AG04450 (cell line): ENCODE measurements at regions of chr20 and their contacts with region 1.

Region 1: DNA sequence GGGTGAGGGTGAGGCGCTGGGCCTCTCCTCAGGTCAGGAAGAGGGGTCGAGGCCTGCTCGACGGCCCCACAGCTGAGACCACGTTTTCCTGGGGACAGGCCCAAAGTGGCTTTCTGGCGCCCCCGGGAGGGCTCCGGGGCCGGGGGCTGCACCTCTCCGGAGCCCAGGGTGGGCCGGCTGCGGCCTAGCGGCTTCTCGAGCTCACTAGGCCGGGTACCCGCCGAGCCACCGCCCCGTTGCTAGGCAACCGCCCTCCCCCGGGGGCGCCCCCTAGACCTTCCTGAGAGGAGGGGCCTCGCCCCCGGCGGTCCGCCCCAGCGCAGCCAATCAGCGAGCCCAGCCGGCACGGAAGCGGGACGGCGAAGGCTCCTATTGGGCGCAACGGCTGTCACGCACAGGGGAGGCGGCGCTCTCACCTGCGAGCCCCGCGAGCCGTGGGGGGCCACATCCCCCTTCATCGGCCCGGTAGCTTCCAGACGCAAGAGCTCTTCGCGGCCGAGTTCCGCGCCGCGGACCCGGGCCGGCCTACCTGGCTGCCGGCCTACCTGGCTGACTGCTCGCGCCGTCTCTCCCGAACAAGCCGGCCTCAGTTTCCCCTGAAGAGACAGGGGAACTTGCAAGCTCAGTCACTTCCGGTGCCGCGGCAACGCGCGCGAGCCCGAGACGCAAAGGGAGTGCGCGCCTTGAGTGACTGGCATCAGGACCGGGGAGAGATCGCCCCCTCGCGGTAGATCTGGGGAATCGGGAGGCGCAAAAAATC is 831 bp upstream of the BCL2L1 start:
- DNase-seq: peak; percentile 96
- H3K4me3 ChIP-seq: peak overlapping the region; percentile 84
- H3K27ac ChIP-seq: peak overlapping the region; percentile 98
- H3K27me3 ChIP-seq: no peaks in the 10 kb centered on the region
- CTCF ChIP-seq: peak; percentile 93

Region 2: DNA sequence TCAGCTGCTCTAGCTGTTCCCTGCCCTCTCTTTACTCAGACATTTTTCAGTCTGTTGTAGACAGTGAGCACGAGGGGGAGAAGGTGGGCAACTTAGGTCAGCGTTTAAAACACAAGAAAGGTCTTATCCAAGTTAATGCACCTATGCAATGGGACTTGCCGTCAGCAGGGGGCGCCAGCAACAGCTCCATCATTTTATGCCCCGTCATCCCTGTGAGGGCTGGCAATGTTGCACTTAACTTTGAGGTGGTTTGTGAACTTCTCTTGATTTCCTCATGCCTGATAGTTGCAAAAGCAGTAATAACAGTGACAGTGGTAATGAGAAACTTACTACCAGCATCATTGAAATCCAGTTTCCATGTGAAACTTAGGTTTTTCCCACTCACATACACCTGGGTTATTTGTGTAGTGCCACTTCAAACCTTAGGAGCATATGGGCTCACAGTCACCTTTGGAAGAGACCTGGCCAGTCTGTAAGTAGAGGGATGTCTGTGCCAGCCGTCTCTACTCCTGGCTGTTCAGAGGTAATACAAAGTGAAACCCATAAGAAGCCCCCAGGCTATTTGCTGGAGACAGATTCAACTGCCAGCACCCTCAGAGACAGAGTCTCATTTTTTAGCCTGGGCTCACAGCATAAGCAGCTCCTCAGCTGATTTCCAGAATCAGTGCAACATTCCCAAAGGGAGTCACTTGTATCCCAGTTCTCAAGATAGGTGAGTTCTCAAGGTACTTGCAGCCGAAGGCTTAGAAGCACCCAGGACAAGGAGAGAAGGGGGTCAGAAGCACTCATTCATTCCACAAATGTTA is 163.2 kb before region 1 on chr20:
- CTCF ChIA-PET with region 1: interaction called, 61 read pairs
- POLR2A ChIA-PET with region 1: interaction called, 6 read pairs
- DNase-seq: peak; percentile 62
- H3K4me3 ChIP-seq: no peak overlapping the region
- H3K27ac ChIP-seq: peak overlapping the region; percentile 99
- H3K27me3 ChIP-seq: no peaks in the 10 kb centered on the region
- CTCF ChIP-seq: peak; percentile 94

Region 3: GRCh38 chr20:31644701-31645100 is 78.8 kb before region 1 on chr20:
- CTCF ChIA-PET with region 1: interaction called, 17 read pairs
- POLR2A ChIA-PET with region 1: no interaction called
- DNase-seq: no peak
- H3K4me3 ChIP-seq: no peak overlapping the region
- H3K27ac ChIP-seq: no peak overlapping the region
- H3K27me3 ChIP-seq: peaks cover 19% of the 10 kb centered on the region
- CTCF ChIP-seq: no peak

Region 4: DNA sequence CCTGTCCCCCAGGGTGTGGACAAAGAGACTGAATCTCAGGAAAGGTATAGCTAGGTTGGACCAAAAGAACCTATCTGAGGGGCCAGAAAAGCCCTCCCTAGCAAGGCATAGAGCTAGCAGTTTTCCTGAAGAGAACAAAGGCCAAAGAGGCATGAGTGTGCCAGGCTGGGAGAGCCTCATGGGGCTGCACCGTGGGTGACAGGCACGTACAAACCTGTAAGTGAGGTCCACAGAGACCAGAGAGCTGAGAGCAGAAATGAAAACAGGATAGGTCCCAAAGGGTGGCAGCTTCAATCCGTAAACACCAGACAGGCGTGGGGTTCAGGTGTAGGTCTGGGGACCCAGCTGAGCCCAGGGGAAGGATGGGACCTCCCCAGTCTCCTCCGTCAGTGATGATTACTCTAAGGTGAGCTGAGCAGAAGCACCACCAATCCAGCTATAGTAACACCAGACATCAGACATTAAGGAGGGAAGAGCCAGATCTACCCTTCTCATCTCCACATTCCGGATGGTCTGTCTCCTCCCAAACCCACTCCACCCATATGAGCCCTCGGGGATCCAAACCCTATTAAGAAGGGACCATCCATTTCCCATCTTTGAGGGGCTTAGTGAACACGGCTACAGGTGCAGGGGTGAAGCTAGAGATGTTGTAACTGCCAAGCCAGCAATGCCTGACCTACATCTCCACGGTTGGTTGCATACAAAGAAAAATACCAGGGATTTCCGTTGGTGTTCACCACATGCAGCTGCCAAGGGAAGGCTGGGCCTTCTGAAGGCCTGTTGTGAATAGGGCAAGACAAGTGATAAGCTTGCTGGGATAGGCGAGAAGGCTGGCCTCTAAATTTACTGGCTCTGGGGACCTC is 39.1 kb before region 1 on chr20:
- CTCF ChIA-PET with region 1: interaction called, 14 read pairs
- POLR2A ChIA-PET with region 1: interaction called, 4 read pairs
- DNase-seq: no peak
- H3K4me3 ChIP-seq: no peak overlapping the region
- H3K27ac ChIP-seq: no peak overlapping the region
- H3K27me3 ChIP-seq: no peaks in the 10 kb centered on the region
- CTCF ChIP-seq: no peak

Region 5: DNA sequence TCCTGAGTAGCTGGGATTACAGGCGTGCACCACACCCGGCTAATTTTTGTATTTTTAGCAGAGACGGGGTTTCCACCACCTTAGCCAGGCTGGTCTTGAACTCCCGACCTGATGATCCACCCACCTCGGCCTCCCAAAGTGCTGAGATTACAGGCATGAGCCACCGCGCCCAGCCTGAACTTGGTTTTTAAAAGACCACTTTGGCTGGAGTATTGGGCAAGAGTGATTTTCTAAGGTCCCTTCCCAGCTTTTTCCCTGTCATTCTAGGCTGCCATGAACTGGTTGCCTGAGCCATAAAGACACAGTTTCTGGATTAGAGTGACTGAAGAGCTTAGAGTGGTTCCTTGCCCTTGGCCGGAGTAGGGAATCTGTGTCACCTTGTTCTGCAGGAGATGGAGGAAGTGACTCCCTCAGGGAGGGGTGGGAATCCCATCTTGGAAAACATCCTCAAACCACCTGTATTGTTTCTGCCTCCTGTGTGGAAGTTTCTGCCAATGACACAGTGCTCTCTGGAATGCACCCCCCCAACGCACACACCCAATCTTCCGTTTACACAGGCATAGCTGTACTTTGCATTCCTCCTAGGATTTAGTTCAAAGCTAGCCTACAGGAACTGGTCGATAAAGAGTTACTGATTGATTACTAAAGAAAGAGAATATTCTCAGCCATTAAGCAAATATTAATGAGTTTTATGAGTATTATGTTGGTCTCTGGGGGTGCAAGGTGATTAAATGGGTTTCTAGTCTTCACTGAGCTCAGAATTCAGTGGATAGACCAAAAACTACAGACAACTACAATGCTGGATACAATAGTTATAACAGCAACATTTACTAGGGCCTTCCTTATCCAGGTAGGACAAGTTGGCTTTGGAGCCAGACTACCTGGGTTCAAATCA is 19.0 kb before region 1 on chr20:
- CTCF ChIA-PET with region 1: interaction called, 77 read pairs
- POLR2A ChIA-PET with region 1: interaction called, 11 read pairs
- DNase-seq: no peak
- H3K4me3 ChIP-seq: no peak overlapping the region
- H3K27ac ChIP-seq: peak overlapping the region; percentile 75
- H3K27me3 ChIP-seq: no peaks in the 10 kb centered on the region
- CTCF ChIP-seq: no peak

Region 6: GRCh38 chr20:31751126-31751525 is 27.6 kb after region 1 on chr20:
- CTCF ChIA-PET with region 1: interaction called, 70 read pairs
- POLR2A ChIA-PET with region 1: interaction called, 3 read pairs
- DNase-seq: peak; percentile 78
- H3K4me3 ChIP-seq: no peak overlapping the region
- H3K27ac ChIP-seq: peak overlapping the region; percentile 86
- H3K27me3 ChIP-seq: no peaks in the 10 kb centered on the region
- CTCF ChIP-seq: no peak